RWPE1 (cell line): ENCODE measurements at regions of chr9 and their contacts with region 1.

Region 1: GRCh38 chr9:116800885-116801284 is 113.8 kb downstream of the TRIM32 start:
- DNase-seq: no peak
- H3K27ac ChIP-seq: no peak overlapping the region
- CTCF ChIP-seq: no peak

Region 2: DNA sequence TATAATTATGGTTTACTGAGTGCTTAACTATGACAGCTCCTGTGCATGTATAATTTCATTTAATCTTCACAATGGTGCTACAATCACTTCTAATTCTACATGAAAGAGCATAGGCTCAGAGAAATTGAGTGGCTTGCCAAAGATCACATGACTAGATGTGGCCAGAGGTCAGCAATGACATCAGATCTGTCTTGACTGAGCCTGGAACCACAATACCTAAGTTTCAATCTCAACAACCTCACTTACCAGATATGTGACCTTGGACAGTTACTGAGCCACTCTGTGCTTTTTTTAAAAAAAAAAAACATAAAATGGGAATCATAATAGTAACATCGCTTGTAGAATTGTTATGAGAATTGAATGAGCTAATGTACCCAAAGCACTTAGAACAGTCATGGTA is 16.9 kb after region 1 on chr9:
- CTCF ChIA-PET with region 1: no interaction called
- POLR2A ChIA-PET with region 1: no interaction called
- DNase-seq: no peak
- H3K27ac ChIP-seq: no peak overlapping the region
- CTCF ChIP-seq: no peak

Region 3: GRCh38 chr9:117018966-117019617 is 218.2 kb after region 1 on chr9:
- CTCF ChIA-PET with region 1: interaction called, 11 read pairs
- POLR2A ChIA-PET with region 1: no interaction called
- DNase-seq: no peak
- H3K27ac ChIP-seq: no peak overlapping the region
- CTCF ChIP-seq: no peak